PC-9 (cell line): ENCODE measurements at regions of chr18 and their contacts with region 1.

Region 1: DNA sequence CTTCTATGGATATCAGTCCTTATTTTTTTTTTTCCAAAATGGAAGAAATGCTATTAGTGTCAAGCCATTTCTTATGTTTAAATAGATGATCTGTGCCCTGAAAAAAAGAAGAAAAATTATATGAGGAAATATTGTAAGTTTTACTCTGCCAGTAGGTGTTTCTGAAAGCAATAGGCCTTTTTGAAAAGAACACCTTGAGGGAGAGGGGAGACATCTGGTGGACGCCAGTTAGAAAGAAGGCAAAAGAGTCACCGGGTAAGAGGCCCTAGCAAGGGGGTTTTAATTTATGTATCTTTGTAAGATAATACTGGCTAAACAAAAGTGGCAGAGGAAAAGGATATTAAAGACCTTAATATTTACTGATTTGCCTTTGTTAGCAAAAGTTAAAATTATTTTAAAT is 56.1 kb downstream of the DYNAP start:
- DNase-seq: peak in 1 of 2 experiments; percentile 3
- H3K4me3 ChIP-seq: no peak overlapping the region
- H3K27ac ChIP-seq: no peak overlapping the region
- H3K4me1 ChIP-seq: no peaks in the 10 kb centered on the region
- H3K27me3 ChIP-seq: no peaks in the 10 kb centered on the region
- CTCF ChIP-seq: peak; percentile 73

Region 2: DNA sequence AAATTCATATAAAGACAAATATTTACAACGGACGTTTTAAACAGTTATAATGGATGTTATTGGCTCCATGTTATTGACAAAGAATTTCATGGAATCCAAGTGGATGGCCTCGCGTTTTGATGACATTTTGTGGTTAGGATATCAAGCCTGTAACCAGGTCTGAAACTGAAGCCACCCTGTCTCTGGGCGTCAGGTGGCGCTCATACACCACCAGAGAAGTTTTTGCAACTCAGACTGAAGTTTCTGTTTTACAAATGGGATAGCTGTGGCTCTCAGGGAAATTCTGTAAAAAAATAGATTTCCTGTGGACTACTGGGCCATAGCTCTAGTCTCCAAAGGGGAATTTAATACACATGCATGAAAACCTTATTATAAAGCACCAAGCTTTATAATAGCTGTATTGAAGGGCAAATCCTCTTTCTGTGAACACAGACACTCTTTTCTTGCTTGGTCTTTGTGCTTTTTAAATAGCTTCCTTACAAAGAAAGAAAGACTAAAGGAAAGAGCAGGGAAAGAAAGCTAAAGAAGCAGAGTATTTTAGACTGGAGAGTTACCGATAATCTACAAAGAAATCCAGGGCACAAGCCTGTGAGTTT is 202.8 kb before region 1 on chr18:
- CTCF ChIA-PET with region 1: no interaction called
- POLR2A ChIA-PET with region 1: no interaction called
- intact Hi-C with region 1: loop called (anchors 1 kb)
- DNase-seq: peak; percentile 40 to 55
- H3K4me3 ChIP-seq: no peak overlapping the region
- H3K27ac ChIP-seq: no peak overlapping the region
- H3K4me1 ChIP-seq: no peaks in the 10 kb centered on the region
- H3K27me3 ChIP-seq: no peaks in the 10 kb centered on the region
- CTCF ChIP-seq: peak; percentile 86

Region 3: GRCh38 chr18:54466248-54467005 is 180.7 kb before region 1 on chr18:
- CTCF ChIA-PET with region 1: no interaction called
- POLR2A ChIA-PET with region 1: interaction called, 12 read pairs
- intact Hi-C with region 1: no loop called
- DNase-seq: no peak
- H3K4me3 ChIP-seq: no peak overlapping the region
- H3K27ac ChIP-seq: no peak overlapping the region
- H3K4me1 ChIP-seq: no peaks in the 10 kb centered on the region
- H3K27me3 ChIP-seq: no peaks in the 10 kb centered on the region
- CTCF ChIP-seq: no peak

Region 4: DNA sequence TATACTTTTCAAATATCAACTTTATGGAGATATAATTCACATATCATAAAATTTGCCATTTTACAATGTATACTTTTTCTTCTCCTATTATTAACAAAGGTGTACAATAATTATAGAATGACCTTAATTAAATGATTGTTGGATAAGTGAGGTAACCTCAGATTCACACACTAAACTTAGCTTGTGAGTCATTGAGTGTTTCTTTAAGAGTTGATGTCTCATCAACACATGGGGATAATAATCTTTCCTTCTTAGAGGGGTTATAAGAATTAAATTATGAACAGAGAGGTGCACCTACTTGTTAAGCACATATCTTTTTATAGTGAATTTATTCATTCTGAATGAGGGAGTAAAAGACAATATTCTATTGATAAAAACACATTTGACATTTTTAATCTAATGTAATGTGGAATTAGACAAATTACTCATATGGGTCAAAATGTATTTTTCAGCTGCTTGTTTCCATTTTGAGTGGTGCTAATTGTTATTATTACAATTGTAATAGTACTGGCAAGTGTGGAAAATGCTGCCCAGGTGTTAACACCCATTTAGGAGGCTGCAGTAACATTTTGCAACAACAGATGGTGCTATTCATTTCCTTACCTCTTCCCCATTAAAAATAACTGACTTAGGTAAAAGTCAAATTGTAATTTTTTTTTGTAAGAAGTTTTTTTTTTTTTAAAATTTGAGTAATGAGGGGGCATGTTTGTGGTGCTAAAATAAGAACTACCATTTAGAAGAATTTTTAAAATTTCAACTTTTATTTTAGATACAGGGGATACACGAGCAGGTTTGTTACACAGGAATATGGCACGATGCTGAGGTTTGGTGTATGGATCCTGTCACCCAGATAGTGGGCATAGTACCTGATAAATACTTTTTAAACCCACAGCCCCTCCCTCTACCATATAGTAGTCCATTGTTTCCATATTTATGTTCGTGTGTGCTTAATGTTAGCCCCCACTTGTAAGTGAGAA is 88.3 kb before region 1 on chr18:
- CTCF ChIA-PET with region 1: no interaction called
- POLR2A ChIA-PET with region 1: no interaction called
- intact Hi-C with region 1: loop called (anchors 1 kb)
- DNase-seq: no peak
- H3K4me3 ChIP-seq: no peak overlapping the region
- H3K27ac ChIP-seq: no peak overlapping the region
- H3K4me1 ChIP-seq: no peaks in the 10 kb centered on the region
- H3K27me3 ChIP-seq: no peaks in the 10 kb centered on the region
- CTCF ChIP-seq: peak; percentile 82